ENCODE measurements at regions of chr2 and their contacts with region 1.

Region 1: DNA sequence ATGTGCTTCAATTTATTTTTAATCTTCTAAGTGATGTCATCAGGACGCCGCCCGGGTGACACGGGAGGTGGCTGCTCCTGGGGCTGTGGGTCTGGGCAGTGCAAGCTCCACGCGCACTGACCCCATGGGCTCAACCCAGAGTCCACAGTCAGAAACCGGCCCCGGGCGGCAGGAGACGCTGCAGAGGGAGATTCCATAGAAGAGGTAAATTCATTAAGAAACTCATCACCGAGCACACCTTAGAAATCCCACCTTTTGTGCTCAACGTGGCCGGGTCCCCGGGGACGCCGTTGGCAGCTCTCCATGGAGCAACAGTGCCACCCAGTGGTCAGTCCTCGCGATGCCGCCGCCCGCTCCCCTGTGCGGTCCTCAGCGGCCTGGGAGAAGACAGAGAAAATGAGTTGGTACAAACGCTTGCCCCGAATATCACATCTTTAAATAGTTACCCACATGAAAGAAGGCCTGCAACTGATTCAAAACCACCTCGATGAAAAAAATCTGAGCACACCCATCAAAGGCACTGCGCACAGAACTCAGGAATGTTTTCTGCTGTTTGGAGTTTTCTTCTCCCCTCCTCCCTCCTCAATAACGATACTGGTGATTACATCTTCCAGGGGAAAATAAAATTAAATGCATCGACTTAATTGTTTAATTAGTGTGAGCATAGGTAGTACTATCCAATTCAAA is 92.6 kb downstream of the CMPK2 start:
- DNase-seq: peak; percentile 86
- ATAC-seq: peak; percentile 94
- H3K4me3 Mint-ChIP-seq: no peak overlapping the region
- H3K27ac Mint-ChIP-seq: no peak overlapping the region
- H3K4me1 Mint-ChIP-seq: peaks cover 10% of the 10 kb centered on the region
- H3K27me3 Mint-ChIP-seq: peaks cover 28% of the 10 kb centered on the region

Region 2: DNA sequence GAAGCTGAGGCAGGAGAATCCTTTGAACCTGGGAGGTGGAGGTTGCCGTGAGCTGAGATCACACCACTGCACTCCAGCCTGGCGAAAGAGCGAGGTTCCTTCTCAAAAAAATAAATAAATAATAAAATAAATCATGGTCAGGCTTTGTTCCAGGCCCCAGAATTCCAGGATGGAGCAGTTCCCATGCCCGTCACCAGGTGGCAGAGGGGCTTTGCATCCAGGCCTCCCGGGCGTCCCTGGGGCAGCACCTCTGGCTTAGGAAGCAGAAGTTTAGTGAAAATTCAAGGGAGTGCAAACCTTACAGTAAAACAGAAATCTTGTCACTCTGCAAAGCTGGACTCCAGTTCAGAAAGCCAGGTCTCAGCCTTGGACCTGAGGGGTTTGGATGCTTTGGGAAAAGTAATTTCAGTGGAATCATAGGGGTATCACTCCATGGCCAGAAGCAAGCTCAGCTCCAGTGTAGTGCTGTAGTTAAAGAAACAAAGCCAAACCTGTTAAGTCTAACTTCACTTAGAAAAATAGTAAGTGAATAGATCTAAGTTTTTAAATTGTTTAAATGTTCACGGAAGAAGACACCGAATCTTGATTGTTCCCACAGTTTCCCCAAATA is 420.1 kb before region 1 on chr2:
- CTCF ChIA-PET with region 1: no interaction called
- POLR2A ChIA-PET with region 1: no interaction called
- intact Hi-C with region 1: loop called in 1 of 2 experiments (anchors 2 kb)
- DNase-seq: no peak
- ATAC-seq: no peak
- H3K4me3 Mint-ChIP-seq: no peak overlapping the region
- H3K27ac Mint-ChIP-seq: no peak overlapping the region
- H3K4me1 Mint-ChIP-seq: no peaks in the 10 kb centered on the region
- H3K27me3 Mint-ChIP-seq: no peaks in the 10 kb centered on the region

Region 3: DNA sequence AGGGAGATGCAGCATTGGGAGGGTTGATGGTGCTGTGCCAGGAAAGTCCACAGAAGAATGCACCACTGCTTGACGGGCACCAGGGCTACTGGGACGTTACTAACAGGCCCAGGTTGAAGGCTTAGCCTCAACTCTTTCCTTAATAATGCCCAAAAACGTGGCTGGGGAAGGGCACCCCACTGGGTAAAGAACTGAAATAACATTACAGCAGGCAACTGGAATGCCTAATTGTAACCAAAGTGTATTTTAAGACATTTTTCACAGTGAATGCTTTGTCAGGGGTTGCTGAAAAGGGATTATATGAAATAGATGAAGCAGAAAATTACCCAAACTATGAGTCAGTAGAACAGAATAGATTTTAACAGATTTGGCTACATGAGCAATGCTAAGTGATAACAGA is 98.8 kb before region 1 on chr2:
- CTCF ChIA-PET with region 1: no interaction called
- POLR2A ChIA-PET with region 1: no interaction called
- intact Hi-C with region 1: loop called in 1 of 2 experiments (anchors 5 kb)
- DNase-seq: no peak
- ATAC-seq: no peak
- H3K4me3 Mint-ChIP-seq: no peak overlapping the region
- H3K27ac Mint-ChIP-seq: no peak overlapping the region
- H3K4me1 Mint-ChIP-seq: no peaks in the 10 kb centered on the region
- H3K27me3 Mint-ChIP-seq: peaks cover 7% of the 10 kb centered on the region

Region 4: GRCh38 chr2:7023542-7023941 is 250.4 kb after region 1 on chr2:
- CTCF ChIA-PET with region 1: no interaction called
- POLR2A ChIA-PET with region 1: no interaction called
- intact Hi-C with region 1: no loop called
- DNase-seq: no peak
- ATAC-seq: no peak
- H3K4me3 Mint-ChIP-seq: no peak overlapping the region
- H3K27ac Mint-ChIP-seq: no peak overlapping the region
- H3K4me1 Mint-ChIP-seq: peaks cover 2% of the 10 kb centered on the region
- H3K27me3 Mint-ChIP-seq: no peaks in the 10 kb centered on the region

Measured in activated CD4-positive, alpha-beta T cell treated with anti-CD3 and anti-CD28 coated beads for 36 hours (primary cell).